H1 (cell line): ENCODE measurements at regions of chr12 and their contacts with region 1.

Region 1: DNA sequence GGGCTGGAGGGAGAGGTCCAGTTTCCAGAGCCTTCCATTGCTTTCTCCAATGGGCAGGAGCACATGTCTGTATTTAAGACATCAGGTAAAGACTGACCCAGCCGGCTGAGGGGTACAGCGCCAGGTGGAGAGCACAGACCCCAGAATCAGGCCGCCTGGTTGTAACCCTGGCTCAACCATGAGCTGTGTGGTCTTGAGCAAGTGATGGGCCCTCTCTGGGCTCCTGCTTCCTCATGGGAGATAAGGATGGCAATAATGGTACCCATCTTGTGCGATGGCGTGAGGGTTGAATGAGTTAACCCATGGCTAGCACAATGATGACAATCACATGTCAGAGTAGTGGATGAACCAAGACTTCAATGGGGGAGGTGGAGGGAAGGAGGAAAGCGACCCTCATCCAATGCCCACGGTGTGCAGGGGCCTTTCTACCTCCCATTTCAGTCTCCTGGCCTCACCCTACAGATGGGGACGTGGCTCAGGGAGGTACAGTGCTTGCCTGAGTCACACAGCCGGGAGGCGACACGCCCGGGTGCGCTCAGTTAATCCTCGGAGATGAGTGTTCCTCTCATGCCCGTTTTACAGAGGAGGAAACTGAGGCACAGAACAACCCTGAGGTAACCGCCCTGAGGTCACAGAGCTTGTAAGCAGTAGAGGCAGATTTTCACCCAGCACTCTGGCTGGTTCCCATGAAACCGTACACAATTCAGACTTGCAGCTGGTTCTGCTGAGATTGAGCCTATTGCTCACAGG is 163.9 kb downstream of the RBM19 start:
- DNase-seq: no peak
- H3K4me3 ChIP-seq: no peak overlapping the region
- H3K27ac ChIP-seq: no peak overlapping the region
- H3K4me1 ChIP-seq: peaks cover 0 to 3% (median 0%) of the 10 kb centered on the region in 4 experiments; a peak in 3 of 7 replicates
- H3K27me3 ChIP-seq: peaks cover 0 to 3% (median 0%) of the 10 kb centered on the region in 4 experiments; a peak in 2 of 7 replicates
- CTCF ChIP-seq: no peak
- EP300 ChIP-seq: no peak
- POLR2A ChIP-seq: no peak
- RAD21 ChIP-seq: no peak

Region 2: DNA sequence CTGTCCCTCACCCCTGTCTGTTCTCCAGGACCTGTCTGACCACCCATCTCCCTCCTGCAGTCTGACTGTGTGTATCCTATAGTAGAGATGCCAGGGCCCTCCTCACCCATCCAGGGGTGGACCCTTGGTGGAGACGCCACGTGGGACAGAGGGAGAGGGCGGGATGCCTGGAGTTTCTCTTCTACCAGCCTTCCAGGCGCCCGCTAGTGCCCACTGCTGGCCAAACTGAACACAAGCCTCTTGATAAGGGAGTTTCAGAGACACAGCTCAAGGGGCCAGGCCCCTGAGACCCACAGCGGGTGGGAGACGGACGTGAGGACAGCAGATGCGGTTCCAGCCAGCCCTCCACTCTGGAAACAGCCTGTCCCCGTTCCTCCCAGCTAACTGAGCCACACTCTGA is 16.7 kb after region 1 on chr12:
- CTCF ChIA-PET with region 1: interaction called, 16 read pairs
- POLR2A ChIA-PET with region 1: no interaction called
- DNase-seq: peak; percentile 23 to 86
- H3K4me3 ChIP-seq: no peak overlapping the region
- H3K27ac ChIP-seq: no peak overlapping the region
- H3K4me1 ChIP-seq: peaks cover 0 to 5% (median 4%) of the 10 kb centered on the region in 4 experiments; a peak in 5 of 7 replicates
- H3K27me3 ChIP-seq: no peaks in the 10 kb centered on the region
- CTCF ChIP-seq: peak; percentile 71 to 82 (median 74)
- EP300 ChIP-seq: no peak
- POLR2A ChIP-seq: no peak
- RAD21 ChIP-seq: peak; percentile 72 to 84